ENCODE measurements at regions of chr2 and their contacts with region 1.

Region 1: DNA sequence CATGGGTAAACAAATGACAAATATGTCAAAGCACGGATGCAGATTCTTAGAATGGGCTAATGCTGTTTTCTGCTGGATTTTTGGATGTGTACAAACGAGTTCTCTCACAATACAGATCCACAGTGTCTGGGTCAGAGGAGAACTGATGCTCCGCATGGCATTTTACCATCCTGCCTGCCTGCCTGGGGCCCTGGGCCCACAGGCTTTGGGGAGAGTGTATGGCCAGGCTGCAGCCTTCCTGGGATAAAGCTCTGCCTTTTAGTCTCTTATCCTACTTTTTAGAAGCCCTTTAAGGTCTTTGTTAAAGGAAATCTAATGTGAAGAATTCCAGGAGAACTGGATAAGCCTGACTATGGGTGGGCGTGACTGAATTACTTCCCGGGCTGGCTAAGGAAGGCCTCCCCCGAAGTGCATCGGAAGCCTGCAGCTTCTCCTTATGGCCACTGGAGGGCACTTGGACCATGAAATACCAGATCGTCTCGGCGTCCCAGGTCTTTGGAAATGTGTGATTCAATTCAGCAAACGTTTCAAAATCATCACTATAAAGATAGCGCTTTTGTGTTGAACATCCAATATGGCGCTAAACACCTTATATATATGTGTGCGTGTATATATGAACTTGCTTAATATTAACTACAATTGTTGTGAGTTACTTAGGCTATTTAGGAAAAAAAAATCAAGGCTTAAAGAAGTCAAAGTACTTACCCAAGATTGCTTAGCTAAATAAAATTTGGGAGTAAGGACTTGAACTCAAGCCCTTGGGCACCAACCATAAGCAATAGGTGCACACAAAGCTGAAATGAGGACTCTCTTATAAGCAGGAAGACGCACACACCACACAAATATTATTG is 15.2 kb upstream of the DNPEP start:
- DNase-seq: peak; percentile 89
- H3K4me3 ChIP-seq: no peak overlapping the region
- H3K27ac ChIP-seq: peak overlapping the region; percentile 88 to 99 (median 96)
- H3K4me1 ChIP-seq: peaks cover 0 to 61% (median 40%) of the 10 kb centered on the region in 4 donors
- H3K27me3 ChIP-seq: no peaks in the 10 kb centered on the region
- CTCF ChIP-seq: peak; percentile 78 to 94 (median 89)
- EP300 ChIP-seq: no peak
- POLR2A ChIP-seq: no peak

Region 2: GRCh38 chr2:219314804-219315468 is 88.0 kb before region 1 on chr2:
- intact Hi-C with region 1: no loop called
- DNase-seq: no peak
- H3K4me3 ChIP-seq: no peak overlapping the region
- H3K27ac ChIP-seq: no peak overlapping the region
- H3K4me1 ChIP-seq: no peaks in the 10 kb centered on the region
- H3K27me3 ChIP-seq: peaks cover 0 to 20% (median 4%) of the 10 kb centered on the region in 3 donors
- CTCF ChIP-seq: no peak
- EP300 ChIP-seq: no peak
- POLR2A ChIP-seq: no peak

Region 3: DNA sequence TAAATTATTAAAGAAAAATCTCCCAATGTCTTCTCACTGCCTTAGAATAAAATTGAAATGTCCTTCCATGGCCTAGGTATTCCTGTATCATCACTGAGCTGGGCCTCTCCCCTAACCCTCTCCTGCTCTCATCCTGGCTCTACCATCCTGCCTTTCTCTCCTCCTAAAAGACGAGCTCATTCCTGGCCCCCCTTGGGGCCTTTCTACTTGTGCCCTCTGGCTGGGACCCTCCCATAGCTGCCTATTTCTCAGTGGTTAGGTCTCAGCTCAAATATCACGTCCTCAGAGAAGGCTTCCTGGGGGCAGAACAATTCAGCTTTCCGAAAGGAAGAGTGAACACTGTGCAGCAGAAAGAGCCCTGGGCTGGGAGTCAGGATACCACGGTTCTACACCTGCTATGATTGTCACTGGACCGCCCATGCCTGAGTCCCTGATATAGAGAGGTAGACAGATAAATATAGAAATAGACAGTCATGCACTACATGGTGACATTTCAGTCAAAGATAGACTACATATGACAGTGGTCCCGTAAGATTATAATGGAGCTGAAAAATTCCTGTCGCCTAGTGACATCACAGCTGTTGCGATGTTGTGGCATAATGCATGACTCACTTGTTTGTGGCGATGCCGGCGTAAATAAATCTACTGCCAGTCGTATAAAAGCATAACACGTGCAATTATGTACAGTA is 24.6 kb before region 1 on chr2:
- intact Hi-C with region 1: no loop called
- DNase-seq: no peak
- H3K4me3 ChIP-seq: no peak overlapping the region
- H3K27ac ChIP-seq: no peak overlapping the region
- H3K4me1 ChIP-seq: no peaks in the 10 kb centered on the region
- H3K27me3 ChIP-seq: no peaks in the 10 kb centered on the region
- CTCF ChIP-seq: no peak
- EP300 ChIP-seq: no peak
- POLR2A ChIP-seq: no peak

Region 4: GRCh38 chr2:219433666-219434467 is 31.0 kb after region 1 on chr2:
- intact Hi-C with region 1: loop called (anchors 1 kb)
- DNase-seq: peak; percentile 94
- H3K4me3 ChIP-seq: peak overlapping the region; percentile 19 to 53 (median 46)
- H3K27ac ChIP-seq: peak overlapping the region; percentile 96 to 99 (median 99)
- H3K4me1 ChIP-seq: peaks cover 0 to 65% (median 63%) of the 10 kb centered on the region in 4 donors
- H3K27me3 ChIP-seq: peaks cover 0 to 13% (median 9%) of the 10 kb centered on the region in 3 donors
- CTCF ChIP-seq: peak; percentile 63 to 87 (median 80)
- EP300 ChIP-seq: peak; percentile 30 to 94 (median 74)
- POLR2A ChIP-seq: peak in 1 of 2 donors; percentile 49

Region 5: DNA sequence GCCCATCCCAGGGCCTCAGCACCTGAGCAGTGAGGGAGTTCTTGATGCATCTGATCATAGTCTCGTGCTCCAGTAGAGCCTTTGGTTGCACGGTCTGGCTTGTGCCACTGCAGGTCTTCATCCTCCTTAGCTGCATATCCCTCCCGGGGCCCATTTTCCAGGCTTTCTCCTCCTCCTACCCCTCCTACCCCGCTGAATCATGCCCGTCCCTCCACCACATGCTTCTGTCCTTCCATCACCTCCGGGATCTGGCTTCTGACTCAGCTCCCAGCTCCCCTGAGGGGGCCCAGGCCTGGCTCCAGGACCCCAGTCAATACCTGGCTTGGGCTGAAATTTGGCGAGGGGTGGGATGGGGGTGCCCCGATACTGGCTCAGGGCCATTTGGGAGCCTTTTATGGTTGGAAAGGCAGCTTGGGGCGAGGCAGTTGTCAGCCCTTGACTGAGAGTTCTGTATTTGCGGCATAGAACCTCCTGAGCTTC is 50.0 kb after region 1 on chr2:
- intact Hi-C with region 1: loop called (anchors 5 kb)
- DNase-seq: peak; percentile 95
- H3K4me3 ChIP-seq: peak overlapping the region in 3 of 4 donors; percentile 2 to 52 (median 26)
- H3K27ac ChIP-seq: peak overlapping the region; percentile 96 to 99 (median 99)
- H3K4me1 ChIP-seq: peaks cover 0 to 99% (median 84%) of the 10 kb centered on the region in 4 donors
- H3K27me3 ChIP-seq: peaks cover 0 to 11% (median 0%) of the 10 kb centered on the region in 3 donors
- CTCF ChIP-seq: no peak
- EP300 ChIP-seq: peak in 3 of 4 donors; percentile 25 to 75 (median 30)
- POLR2A ChIP-seq: no peak

Region 6: DNA sequence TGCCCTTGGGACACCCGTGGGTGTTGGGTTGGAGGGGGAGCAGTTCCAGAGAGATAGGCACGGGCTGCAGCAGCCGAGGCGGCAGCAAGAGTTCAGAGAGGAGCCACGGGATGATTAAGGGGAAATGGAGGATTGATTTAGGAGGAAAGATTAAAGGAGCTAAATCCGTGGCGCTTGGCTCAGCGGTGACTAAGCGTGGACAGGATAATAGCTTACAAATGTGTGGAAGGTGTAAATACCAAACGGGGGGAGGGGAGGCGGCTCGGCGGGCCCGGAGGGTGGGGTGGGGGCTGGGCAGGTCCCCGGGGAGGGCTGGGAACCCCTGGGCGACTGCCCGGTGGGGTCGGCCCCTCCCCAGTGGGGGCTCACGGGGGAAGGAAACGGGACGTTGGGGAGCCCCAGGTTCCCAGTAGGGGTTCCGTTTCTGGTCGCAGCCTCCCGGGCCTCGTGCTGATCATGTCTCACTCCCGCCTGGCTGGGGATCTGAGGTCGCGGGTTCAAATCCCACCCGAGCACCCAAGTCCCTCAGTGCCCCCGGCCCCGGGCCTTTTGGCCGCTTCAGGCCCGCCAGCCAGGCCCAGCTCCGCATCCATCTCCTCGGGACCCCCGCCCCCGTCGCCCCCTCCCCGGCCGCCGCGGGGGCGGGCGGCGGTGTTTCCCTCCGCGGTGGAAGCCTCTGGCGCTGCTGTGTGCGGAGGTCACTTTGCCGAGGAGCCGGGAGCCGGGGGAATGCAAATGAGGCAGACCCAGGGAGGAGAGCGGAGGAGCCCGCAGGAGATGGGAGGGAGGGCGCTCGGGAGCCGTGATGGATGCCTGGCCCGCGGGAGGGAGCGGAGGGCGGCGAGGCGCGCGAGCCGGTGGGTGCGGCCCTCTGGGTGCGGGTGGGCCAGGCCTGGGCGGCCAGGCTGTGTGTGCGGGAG is 119.5 kb after region 1 on chr2:
- intact Hi-C with region 1: loop called (anchors 2 kb)
- DNase-seq: peak; percentile 80
- H3K4me3 ChIP-seq: peak overlapping the region; percentile 18 to 49 (median 43)
- H3K27ac ChIP-seq: peak overlapping the region; percentile 81 to 88 (median 83)
- H3K4me1 ChIP-seq: peaks cover 0 to 31% (median 27%) of the 10 kb centered on the region in 4 donors
- H3K27me3 ChIP-seq: peaks cover 0 to 17% (median 0%) of the 10 kb centered on the region in 3 donors
- CTCF ChIP-seq: peak in 1 of 4 experiments; percentile 4
- EP300 ChIP-seq: no peak
- POLR2A ChIP-seq: no peak

Region 7: GRCh38 chr2:219530048-219530963 is 127.4 kb after region 1 on chr2:
- intact Hi-C with region 1: loop called (anchors 1 kb)
- DNase-seq: peak; percentile 93
- H3K4me3 ChIP-seq: peak overlapping the region in 2 of 4 donors; percentile 19 to 24
- H3K27ac ChIP-seq: peak overlapping the region in 1 of 4 donors; percentile 34
- H3K4me1 ChIP-seq: peaks cover 0 to 9% (median 3%) of the 10 kb centered on the region in 4 donors
- H3K27me3 ChIP-seq: no peaks in the 10 kb centered on the region
- CTCF ChIP-seq: peak; percentile 96 to 98 (median 98)
- EP300 ChIP-seq: no peak
- POLR2A ChIP-seq: no peak

Measured in sigmoid colon (tissue), 7 donors.